MCF 10A (cell line): ENCODE measurements at regions of chr21 and their contacts with region 1.

Region 1: GRCh38 chr21:43810505-43811261 is 21.3 kb downstream of the RRP1 start:
- DNase-seq: peak; percentile 72
- H3K4me3 Mint-ChIP-seq: peak overlapping the region; percentile 67
- H3K27ac Mint-ChIP-seq: no peak overlapping the region
- H3K4me1 Mint-ChIP-seq: peaks cover 25% of the 10 kb centered on the region
- H3K27me3 Mint-ChIP-seq: no peaks in the 10 kb centered on the region
- CTCF ChIP-seq: peak; percentile 96

Region 2: GRCh38 chr21:43853851-43854772 is 43.4 kb after region 1 on chr21:
- CTCF ChIA-PET with region 1: no interaction called
- POLR2A ChIA-PET with region 1: no interaction called
- intact Hi-C with region 1: no loop called
- DNase-seq: no peak
- H3K4me3 Mint-ChIP-seq: no peak overlapping the region
- H3K27ac Mint-ChIP-seq: no peak overlapping the region
- H3K4me1 Mint-ChIP-seq: peaks cover 5% of the 10 kb centered on the region
- H3K27me3 Mint-ChIP-seq: no peaks in the 10 kb centered on the region
- CTCF ChIP-seq: no peak

Region 3: GRCh38 chr21:43864313-43864961 is 53.8 kb after region 1 on chr21:
- CTCF ChIA-PET with region 1: interaction called, 4 read pairs
- POLR2A ChIA-PET with region 1: interaction called, 8 read pairs
- intact Hi-C with region 1: loop called (anchors 5 kb)
- DNase-seq: peak; percentile 64
- H3K4me3 Mint-ChIP-seq: peak overlapping the region; percentile 66
- H3K27ac Mint-ChIP-seq: no peak overlapping the region
- H3K4me1 Mint-ChIP-seq: peaks cover 24% of the 10 kb centered on the region
- H3K27me3 Mint-ChIP-seq: no peaks in the 10 kb centered on the region
- CTCF ChIP-seq: no peak

Region 4: DNA sequence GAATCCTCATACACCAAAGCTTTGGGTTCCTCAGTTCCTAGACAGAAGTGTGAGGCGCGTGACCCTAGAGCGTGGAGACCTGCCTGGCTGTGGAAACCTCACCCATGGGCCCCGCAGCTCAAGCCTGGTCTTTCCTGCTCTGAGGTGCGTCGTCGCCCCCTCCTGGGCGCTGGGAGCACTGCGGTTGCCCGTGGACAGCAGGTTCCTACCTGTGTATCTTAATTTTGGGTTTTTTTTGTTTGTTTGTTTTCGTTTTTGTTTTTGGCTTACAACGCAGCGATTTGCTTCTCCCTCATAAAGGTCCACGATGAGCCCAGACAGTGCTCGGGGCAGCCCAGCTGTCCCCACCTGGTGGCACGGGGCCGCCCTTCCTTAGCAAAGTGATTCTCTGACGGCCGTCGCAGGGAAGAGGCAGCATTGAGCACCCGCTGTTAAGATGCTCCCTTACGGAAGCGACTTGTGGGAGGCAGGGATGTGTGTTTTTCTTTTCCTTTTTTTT is 164.9 kb after region 1 on chr21:
- CTCF ChIA-PET with region 1: interaction called, 22 read pairs
- POLR2A ChIA-PET with region 1: interaction called, 22 read pairs
- intact Hi-C with region 1: loop called (anchors 1 kb)
- DNase-seq: peak; percentile 63
- H3K4me3 Mint-ChIP-seq: no peak overlapping the region
- H3K27ac Mint-ChIP-seq: no peak overlapping the region
- H3K4me1 Mint-ChIP-seq: no peaks in the 10 kb centered on the region
- H3K27me3 Mint-ChIP-seq: no peaks in the 10 kb centered on the region
- CTCF ChIP-seq: peak; percentile 92